Activated naive CD4-positive, alpha-beta T cell treated with anti-CD3 and anti-CD28 coated beads, Interleukin-2, amount 10 ng/mL, durations not matched to agents 7 days and 5 days (primary cell): ENCODE measurements at regions of chr3 and their contacts with region 1.

Region 1: GRCh38 chr3:123642182-123642956 is 57.5 kb upstream of the HACD2 start:
- DNase-seq: peak; percentile 79
- H3K4me3 Mint-ChIP-seq: no peak overlapping the region
- H3K27ac Mint-ChIP-seq: no peak overlapping the region
- H3K4me1 Mint-ChIP-seq: no peaks in the 10 kb centered on the region
- H3K27me3 Mint-ChIP-seq: no peaks in the 10 kb centered on the region

Region 2: DNA sequence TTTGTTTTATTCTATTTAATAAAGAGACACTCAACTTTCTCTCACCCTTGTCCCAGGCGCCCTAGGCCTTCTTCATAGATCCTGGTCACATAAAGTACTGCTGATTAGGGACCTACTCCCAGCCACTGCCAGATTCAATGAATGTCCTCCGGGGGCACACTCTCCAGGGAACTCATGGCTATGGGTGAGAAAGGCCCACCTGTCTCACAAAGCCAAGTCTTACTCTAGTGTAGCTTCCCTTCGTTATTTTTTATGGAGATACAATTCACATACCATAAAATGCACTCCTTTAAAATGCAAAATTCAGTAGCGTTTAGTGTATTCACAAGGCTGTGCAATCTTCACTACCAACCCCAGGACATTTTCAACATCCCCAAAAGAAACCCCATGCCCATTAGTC is 281.3 kb before region 1 on chr3:
- CTCF ChIA-PET with region 1: no interaction called
- DNase-seq: no peak
- H3K4me3 Mint-ChIP-seq: no peak overlapping the region
- H3K27ac Mint-ChIP-seq: no peak overlapping the region
- H3K4me1 Mint-ChIP-seq: no peaks in the 10 kb centered on the region
- H3K27me3 Mint-ChIP-seq: peaks cover 23% of the 10 kb centered on the region

Region 3: GRCh38 chr3:123620343-123620742 is 22.0 kb before region 1 on chr3:
- CTCF ChIA-PET with region 1: no interaction called
- DNase-seq: no peak
- H3K4me3 Mint-ChIP-seq: no peak overlapping the region
- H3K27ac Mint-ChIP-seq: no peak overlapping the region
- H3K4me1 Mint-ChIP-seq: no peaks in the 10 kb centered on the region
- H3K27me3 Mint-ChIP-seq: peaks cover 5% of the 10 kb centered on the region

Region 4: GRCh38 chr3:123652346-123652984 is 10.1 kb after region 1 on chr3:
- CTCF ChIA-PET with region 1: interaction called, 48 read pairs
- DNase-seq: peak; percentile 39
- H3K4me3 Mint-ChIP-seq: no peak overlapping the region
- H3K27ac Mint-ChIP-seq: no peak overlapping the region
- H3K4me1 Mint-ChIP-seq: no peaks in the 10 kb centered on the region
- H3K27me3 Mint-ChIP-seq: no peaks in the 10 kb centered on the region

Region 5: DNA sequence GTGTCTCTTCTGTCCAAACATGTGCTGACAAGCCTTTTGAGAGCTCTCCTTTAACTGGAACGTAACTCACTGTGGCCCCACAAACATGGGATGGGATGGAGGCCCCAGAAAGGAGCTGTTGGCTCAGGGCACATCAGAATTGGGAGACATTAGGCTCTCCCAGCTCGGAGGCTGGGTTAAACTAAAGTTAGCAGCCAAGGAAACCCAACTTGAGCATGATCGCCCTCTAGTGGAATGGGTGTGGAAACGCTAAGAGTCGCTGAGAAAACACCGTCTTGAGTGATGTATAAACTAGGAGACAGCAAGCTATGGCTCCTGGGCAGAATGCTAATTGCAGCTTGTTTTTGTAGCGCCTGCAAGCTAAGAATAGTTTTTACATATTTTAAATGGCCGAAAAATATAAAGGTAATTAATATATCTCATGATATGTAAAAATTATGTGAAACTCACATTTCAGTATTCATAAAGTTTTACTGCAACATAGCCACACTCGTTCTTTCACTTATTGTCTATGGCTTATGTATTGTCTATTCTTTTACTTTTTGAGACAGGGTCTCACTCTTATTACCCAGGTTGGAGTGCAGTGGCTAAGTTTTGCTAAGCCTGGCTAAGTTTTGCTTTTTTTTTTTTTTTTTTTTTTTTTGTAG is 81.3 kb after region 1 on chr3:
- CTCF ChIA-PET with region 1: interaction called, 22 read pairs
- DNase-seq: peak; percentile 60
- H3K4me3 Mint-ChIP-seq: no peak overlapping the region
- H3K27ac Mint-ChIP-seq: no peak overlapping the region
- H3K4me1 Mint-ChIP-seq: no peaks in the 10 kb centered on the region
- H3K27me3 Mint-ChIP-seq: peaks cover 19% of the 10 kb centered on the region

Region 6: DNA sequence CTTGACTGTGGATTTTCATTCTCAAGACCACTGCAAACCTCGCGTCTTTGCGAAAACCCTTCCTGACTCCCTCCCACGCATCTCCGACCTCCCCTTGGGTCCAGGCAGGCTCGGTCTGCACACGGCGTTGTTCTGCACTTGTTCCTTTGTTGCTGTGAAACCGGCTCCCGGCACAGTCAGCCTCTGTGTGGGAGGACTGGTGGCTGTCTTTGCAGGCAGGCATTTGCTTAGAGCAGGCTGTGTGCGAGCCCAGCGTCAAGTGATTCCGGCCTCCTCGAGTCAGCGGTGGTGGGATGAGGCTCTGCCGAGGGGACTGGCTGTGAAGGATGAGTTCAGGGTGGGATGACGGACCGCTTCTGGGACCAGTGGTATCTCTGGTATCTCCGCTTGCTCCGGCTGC is 452.1 kb after region 1 on chr3:
- CTCF ChIA-PET with region 1: no interaction called
- DNase-seq: no peak
- H3K4me3 Mint-ChIP-seq: no peak overlapping the region
- H3K27ac Mint-ChIP-seq: no peak overlapping the region
- H3K4me1 Mint-ChIP-seq: no peaks in the 10 kb centered on the region
- H3K27me3 Mint-ChIP-seq: peaks cover 22% of the 10 kb centered on the region